ENCODE measurements at regions of chr11 and their contacts with region 1.

Region 1: DNA sequence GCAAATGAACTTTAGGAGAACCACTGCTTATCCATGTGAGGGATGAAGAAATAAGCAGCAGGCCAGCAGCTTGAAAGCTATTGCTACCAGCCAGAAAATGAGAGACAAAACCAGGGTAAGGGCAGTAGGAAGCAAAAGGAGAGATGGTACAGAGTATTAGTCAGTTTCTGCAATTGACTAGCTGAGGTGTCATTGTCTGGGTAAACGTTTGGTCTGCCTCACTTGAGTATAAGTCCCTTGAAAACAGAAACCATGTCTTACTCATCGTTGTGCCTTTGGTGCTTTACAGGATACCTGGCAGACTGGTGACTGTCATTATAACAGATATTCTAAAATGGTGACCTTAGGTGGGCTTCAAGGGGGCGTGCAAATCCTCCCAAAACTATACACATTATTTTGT is 63.9 kb upstream of the USP47 start:
- DNase-seq: no peak
- ATAC-seq: no peak

Region 2: DNA sequence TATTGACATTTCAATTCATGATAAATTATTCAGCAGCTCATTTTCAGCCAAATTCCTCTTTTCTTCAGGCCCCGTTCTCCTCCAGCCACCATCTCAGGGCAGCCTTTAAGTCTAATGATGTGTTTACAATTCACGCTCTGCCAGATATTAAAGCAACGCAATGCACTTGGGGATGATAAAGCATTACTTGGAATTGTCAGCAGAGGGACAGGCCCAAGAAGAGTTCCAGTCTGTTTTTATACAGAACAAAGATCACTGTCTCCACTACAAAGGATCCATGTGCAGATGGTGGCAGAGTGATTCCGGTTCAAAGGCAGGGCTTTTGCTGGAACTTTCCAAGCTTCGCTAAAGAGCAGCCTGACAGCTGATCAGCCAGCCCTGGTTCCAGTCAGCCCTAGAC is 142.5 kb before region 1 on chr11:
- intact Hi-C with region 1: loop called (anchors 10 kb)
- DNase-seq: no peak
- ATAC-seq: no peak